CD8-positive, alpha-beta T cell (primary cell): ENCODE measurements at regions of chr2 and their contacts with region 1.

Region 1: GRCh38 chr2:110993557-110994231 is 127.0 kb upstream of the BCL2L11 start:
- DNase-seq: peak in 5 of 9 experiments; percentile 7 to 67 (median 24)
- ATAC-seq: peak; percentile 34
- H3K4me3 ChIP-seq: peak overlapping the region in 1 of 2 experiments; percentile 4
- H3K4me3 Mint-ChIP-seq: peak overlapping the region; percentile 52
- H3K27ac ChIP-seq: peak overlapping the region in 1 of 2 experiments; percentile 51
- H3K27ac Mint-ChIP-seq: peak overlapping the region; percentile 16
- H3K4me1 ChIP-seq: peaks cover 26% of the 10 kb centered on the region
- H3K4me1 Mint-ChIP-seq: peaks cover 21% of the 10 kb centered on the region
- H3K27me3 ChIP-seq: no peaks in the 10 kb centered on the region
- H3K27me3 Mint-ChIP-seq: no peaks in the 10 kb centered on the region
- CTCF ChIP-seq: no peak

Region 2: GRCh38 chr2:110818767-110819481 is 174.8 kb before region 1 on chr2:
- CTCF ChIA-PET with region 1: no interaction called
- POLR2A ChIA-PET with region 1: no interaction called
- intact Hi-C with region 1: loop called in 1 of 2 experiments (anchors 10 kb)
- DNase-seq: peak in 1 of 9 experiments; percentile 27
- ATAC-seq: no peak
- H3K4me3 ChIP-seq: no peak overlapping the region
- H3K4me3 Mint-ChIP-seq: no peak overlapping the region
- H3K27ac ChIP-seq: no peak overlapping the region
- H3K27ac Mint-ChIP-seq: no peak overlapping the region
- H3K4me1 ChIP-seq: peaks cover 5% of the 10 kb centered on the region
- H3K4me1 Mint-ChIP-seq: peaks cover 17% of the 10 kb centered on the region
- H3K27me3 ChIP-seq: no peaks in the 10 kb centered on the region
- H3K27me3 Mint-ChIP-seq: no peaks in the 10 kb centered on the region
- CTCF ChIP-seq: no peak